Colonic mucosa (tissue), 4 donors: ENCODE measurements at regions of chr1 and their contacts with region 1.

Region 1: DNA sequence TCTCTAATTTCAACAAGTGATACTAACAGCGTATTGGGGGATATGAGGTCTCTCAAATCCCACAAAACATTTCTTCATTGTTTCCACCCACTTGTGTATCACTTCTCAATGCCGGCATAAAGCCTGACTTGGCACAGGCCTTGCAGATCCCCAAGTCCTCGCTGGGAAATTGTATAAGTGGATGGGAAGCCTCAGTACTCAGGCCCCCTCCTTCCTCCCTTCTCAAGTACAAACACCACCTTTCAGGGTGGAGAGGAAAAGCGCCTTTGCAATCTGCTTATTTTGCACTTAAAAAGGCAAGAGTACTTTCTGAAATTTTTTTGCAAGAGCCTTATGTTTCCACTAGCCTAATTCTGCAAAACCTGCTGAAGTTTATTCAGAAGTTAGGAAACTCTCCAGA is 25.8 kb upstream of the KLHDC8A start:
- DNase-seq: no peak
- H3K4me3 ChIP-seq: no peak overlapping the region
- H3K27ac ChIP-seq: no peak overlapping the region
- H3K4me1 ChIP-seq: no peaks in the 10 kb centered on the region
- H3K27me3 ChIP-seq: no peaks in the 10 kb centered on the region
- CTCF ChIP-seq: no peak

Region 2: DNA sequence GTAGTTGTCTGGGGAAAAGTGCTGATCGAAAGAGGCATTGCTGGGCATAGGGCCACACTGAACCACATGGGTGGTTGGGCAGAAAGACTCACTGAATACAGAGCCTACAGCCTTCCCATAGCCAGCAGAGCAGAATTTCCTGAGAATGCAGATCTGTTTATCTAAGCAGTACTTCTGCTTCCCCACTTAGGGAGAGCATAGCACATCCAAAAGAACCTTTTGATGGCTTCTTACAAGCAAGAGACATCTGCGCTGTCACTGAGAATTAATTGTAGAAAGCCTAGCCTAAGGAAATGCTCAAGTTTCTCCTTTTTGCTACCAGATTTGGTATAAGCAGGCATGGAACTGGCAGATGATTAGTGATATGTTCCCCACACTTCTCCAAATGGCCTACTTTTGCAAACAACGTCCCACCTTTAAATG is 12.8 kb before region 1 on chr1:
- intact Hi-C with region 1: loop called (anchors 2 kb)
- DNase-seq: no peak
- H3K4me3 ChIP-seq: no peak overlapping the region
- H3K27ac ChIP-seq: no peak overlapping the region
- H3K4me1 ChIP-seq: no peaks in the 10 kb centered on the region
- H3K27me3 ChIP-seq: no peaks in the 10 kb centered on the region
- CTCF ChIP-seq: no peak

Region 3: GRCh38 chr1:205504311-205504984 is 121.9 kb after region 1 on chr1 and contains the start of gene CDK18:
- intact Hi-C with region 1: no loop called
- DNase-seq: peak; percentile 95
- H3K4me3 ChIP-seq: peak within 1 kb of the TSS; percentile 57
- H3K27ac ChIP-seq: no peak within 1 kb of the TSS
- H3K4me1 ChIP-seq: peaks cover 5% of the 10 kb centered on the region
- H3K27me3 ChIP-seq: no peaks in the 10 kb centered on the region
- CTCF ChIP-seq: no peak
- total RNA-seq, gene CDK18: 27.9 to 46.0 TPM

Region 4: GRCh38 chr1:205750138-205751035 is 367.8 kb after region 1 on chr1 and contains the start of gene NUCKS1:
- intact Hi-C with region 1: no loop called
- DNase-seq: peak; percentile 98
- H3K4me3 ChIP-seq: peak within 1 kb of the TSS; percentile 64
- H3K27ac ChIP-seq: peak within 1 kb of the TSS; percentile 89
- H3K4me1 ChIP-seq: peaks cover 7% of the 10 kb centered on the region
- H3K27me3 ChIP-seq: no peaks in the 10 kb centered on the region
- CTCF ChIP-seq: no peak
- total RNA-seq, gene NUCKS1: 117 to 123 TPM